Heart right ventricle (tissue), 16 donors: ENCODE measurements at regions of chr2 and their contacts with region 1.

Region 1: DNA sequence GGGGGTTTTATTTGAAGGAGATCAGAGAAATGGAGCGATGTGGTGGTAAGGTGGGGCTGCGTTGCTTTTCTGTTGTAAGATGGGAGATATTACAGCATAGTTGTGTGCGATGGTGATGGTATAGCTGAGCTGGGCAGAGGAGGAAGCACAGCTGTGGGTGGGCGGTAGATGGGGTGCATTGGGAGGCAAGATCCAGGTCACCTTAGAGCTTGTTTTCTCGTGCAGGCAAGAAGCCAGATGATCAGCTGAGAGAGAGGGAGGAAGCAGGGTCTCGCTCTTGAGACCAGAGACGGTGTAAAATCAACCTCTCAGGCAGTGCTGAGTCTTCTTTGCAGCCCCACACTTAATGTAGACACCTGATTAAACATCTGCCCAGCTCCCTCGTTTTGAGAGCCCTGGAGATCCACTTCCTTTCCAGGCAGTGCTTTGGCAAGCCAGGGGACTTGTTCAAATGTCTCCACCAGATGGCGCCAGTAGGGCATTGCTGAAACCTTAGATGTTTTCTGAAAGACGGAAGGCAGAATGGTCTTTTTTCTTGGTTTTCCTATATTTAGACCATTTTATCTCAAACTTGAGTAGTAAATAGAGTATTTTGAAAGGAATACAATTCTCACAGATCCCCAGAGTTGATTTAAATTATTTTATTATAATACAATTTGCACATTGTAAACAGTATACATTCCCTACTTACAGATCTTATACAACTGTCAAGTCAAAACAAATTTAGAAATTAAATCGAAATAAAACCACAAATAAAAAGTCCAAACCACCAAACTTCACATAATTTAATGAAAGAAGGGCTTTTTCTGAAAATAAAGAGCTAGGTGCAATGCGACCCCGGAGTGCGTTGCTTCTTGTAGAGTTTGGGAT is 21.1 kb upstream of the LYPD6B start:
- DNase-seq: peak; percentile 47 to 80
- ATAC-seq: peak; percentile 51 to 79 (median 66)
- H3K4me3 ChIP-seq: no peak overlapping the region
- H3K27ac ChIP-seq: no peak overlapping the region
- H3K4me1 ChIP-seq: peaks cover 0 to 7% (median 0%) of the 10 kb centered on the region in 9 donors
- H3K27me3 ChIP-seq: peaks cover 0 to 3% (median 0%) of the 10 kb centered on the region in 7 donors
- CTCF ChIP-seq: peak; percentile 76 to 93 (median 88)

Region 2: GRCh38 chr2:148936859-148937450 is 80.4 kb before region 1 on chr2:
- intact Hi-C with region 1: no loop called
- DNase-seq: no peak
- ATAC-seq: no peak
- H3K4me3 ChIP-seq: no peak overlapping the region
- H3K27ac ChIP-seq: no peak overlapping the region
- H3K4me1 ChIP-seq: no peaks in the 10 kb centered on the region
- H3K27me3 ChIP-seq: peaks cover 0 to 7% (median 0%) of the 10 kb centered on the region in 7 donors
- CTCF ChIP-seq: no peak

Region 3: DNA sequence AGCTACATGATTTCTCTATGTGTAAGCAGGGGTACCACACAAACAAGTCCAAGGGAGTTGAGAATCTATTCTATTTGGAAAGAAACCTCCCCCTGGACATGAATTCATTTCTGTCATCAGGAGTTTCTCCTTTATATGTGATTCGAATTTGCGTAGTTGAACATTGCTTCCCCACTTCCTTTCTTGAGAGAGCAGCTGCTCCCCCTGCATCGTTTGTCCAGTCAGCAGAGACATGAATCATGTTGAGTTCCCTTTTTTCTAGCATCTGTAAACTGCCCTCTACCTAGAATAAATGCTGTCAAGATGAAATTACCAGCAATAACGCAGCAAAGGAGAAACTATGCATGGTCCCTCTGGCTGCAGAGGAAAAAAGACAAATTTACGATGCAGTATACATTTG is 68.5 kb before region 1 on chr2:
- intact Hi-C with region 1: no loop called
- DNase-seq: no peak
- ATAC-seq: peak in 1 of 8 donors; percentile 29
- H3K4me3 ChIP-seq: no peak overlapping the region
- H3K27ac ChIP-seq: no peak overlapping the region
- H3K4me1 ChIP-seq: no peaks in the 10 kb centered on the region
- H3K27me3 ChIP-seq: no peaks in the 10 kb centered on the region
- CTCF ChIP-seq: no peak

Region 4: DNA sequence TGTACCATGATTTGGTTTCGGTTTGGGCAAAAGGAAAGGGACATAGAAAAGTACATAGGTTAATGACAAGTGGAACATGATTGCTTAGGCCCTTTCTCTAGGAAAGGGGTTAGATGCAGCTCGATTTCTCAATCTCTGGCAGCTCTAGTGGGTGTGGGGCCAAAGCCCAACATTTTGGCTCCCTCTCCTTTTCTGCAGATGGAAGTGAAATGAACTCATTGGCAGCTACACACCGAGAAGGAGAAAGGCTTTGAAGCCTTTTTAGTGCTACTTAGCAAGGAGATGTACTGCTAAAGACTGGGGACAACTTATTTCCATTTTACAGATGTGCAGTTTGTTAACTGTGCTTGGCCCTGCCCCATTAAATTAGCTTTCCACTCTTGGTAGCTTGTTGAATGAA is 115.0 kb after region 1 on chr2:
- intact Hi-C with region 1: no loop called
- DNase-seq: no peak
- ATAC-seq: no peak
- H3K4me3 ChIP-seq: no peak overlapping the region
- H3K27ac ChIP-seq: no peak overlapping the region
- H3K4me1 ChIP-seq: no peaks in the 10 kb centered on the region
- H3K27me3 ChIP-seq: no peaks in the 10 kb centered on the region
- CTCF ChIP-seq: no peak

Region 5: GRCh38 chr2:149313512-149313972 is 296.2 kb after region 1 on chr2:
- intact Hi-C with region 1: loop called in 5 of 10 experiments (anchors 10 kb)
- DNase-seq: peak in 1 of 2 donors; percentile 3
- ATAC-seq: peak in 1 of 8 donors; percentile 75
- H3K4me3 ChIP-seq: no peak overlapping the region
- H3K27ac ChIP-seq: no peak overlapping the region
- H3K4me1 ChIP-seq: no peaks in the 10 kb centered on the region
- H3K27me3 ChIP-seq: peaks cover 0 to 28% (median 8%) of the 10 kb centered on the region in 7 donors
- CTCF ChIP-seq: peak; percentile 24 to 75 (median 59)

Region 6: DNA sequence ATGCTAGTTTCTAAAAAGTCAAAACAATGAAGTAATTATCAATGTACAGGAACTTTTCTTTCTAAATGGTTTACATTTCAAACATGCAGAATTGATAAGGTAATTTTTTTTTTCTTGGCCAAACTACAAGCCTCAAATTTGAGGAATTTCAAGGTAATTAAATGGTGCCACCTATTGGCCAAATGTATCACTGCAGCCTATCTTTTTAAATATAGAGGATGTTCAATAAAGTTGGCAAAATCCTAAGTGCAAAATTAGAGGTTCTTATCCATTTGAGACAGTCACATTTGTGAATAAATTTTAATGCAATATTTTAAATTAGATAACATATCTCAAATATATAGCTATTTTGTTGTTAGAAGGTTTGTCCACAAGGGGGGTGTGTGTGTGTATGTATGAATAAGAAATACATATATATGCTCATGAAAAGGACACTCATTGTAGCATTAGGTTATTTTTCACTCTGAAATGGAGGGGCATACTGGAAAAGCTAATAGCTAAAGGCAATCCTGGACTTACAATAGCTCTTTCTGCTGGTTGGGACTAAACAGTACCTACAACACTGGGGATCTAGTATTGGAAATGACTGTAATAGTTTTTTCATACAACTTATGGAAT is 544.1 kb after region 1 on chr2:
- intact Hi-C with region 1: loop called (anchors 2 to 5 kb)
- DNase-seq: no peak
- ATAC-seq: no peak
- H3K4me3 ChIP-seq: no peak overlapping the region
- H3K27ac ChIP-seq: no peak overlapping the region
- H3K4me1 ChIP-seq: peaks cover 0 to 9% (median 0%) of the 10 kb centered on the region in 9 donors
- H3K27me3 ChIP-seq: no peaks in the 10 kb centered on the region
- CTCF ChIP-seq: peak; percentile 79 to 95 (median 89)